Tibial artery (tissue), 4 donors: ENCODE measurements at regions of chr2 and their contacts with region 1.

Region 1: GRCh38 chr2:128090945-128091725 is at the start of gene UGGT1:
- DNase-seq: peak; percentile 94 to 96
- H3K4me3 ChIP-seq: peak within 1 kb of the TSS; percentile 76 to 83
- H3K27ac ChIP-seq: peak within 1 kb of the TSS; percentile 73 to 79
- H3K4me1 ChIP-seq: peaks cover 0 to 21% (median 13%) of the 10 kb centered on the region in 4 donors
- H3K27me3 ChIP-seq: no peaks in the 10 kb centered on the region
- CTCF ChIP-seq: no peak

Region 2: GRCh38 chr2:127884436-127885345 is 206.4 kb before region 1 on chr2:
- intact Hi-C with region 1: loop called (anchors 5 kb)
- DNase-seq: no peak
- H3K4me3 ChIP-seq: peak overlapping the region; percentile 71 to 73
- H3K27ac ChIP-seq: peak overlapping the region; percentile 94 to 95
- H3K4me1 ChIP-seq: peaks cover 0 to 58% (median 31%) of the 10 kb centered on the region in 4 donors
- H3K27me3 ChIP-seq: no peaks in the 10 kb centered on the region
- CTCF ChIP-seq: no peak

Region 3: GRCh38 chr2:127901339-127902056 is 189.6 kb before region 1 on chr2:
- intact Hi-C with region 1: loop called (anchors 10 kb)
- DNase-seq: peak; percentile 64 to 82
- H3K4me3 ChIP-seq: no peak overlapping the region
- H3K27ac ChIP-seq: peak overlapping the region; percentile 47 to 68
- H3K4me1 ChIP-seq: peaks cover 0 to 8% (median 3%) of the 10 kb centered on the region in 4 donors
- H3K27me3 ChIP-seq: peaks cover 0 to 9% of the 10 kb centered on the region in 2 donors
- CTCF ChIP-seq: no peak

Region 4: GRCh38 chr2:128178650-128179460 is 87.7 kb after region 1 on chr2:
- intact Hi-C with region 1: no loop called
- DNase-seq: no peak
- H3K4me3 ChIP-seq: no peak overlapping the region
- H3K27ac ChIP-seq: no peak overlapping the region
- H3K4me1 ChIP-seq: no peaks in the 10 kb centered on the region
- H3K27me3 ChIP-seq: no peaks in the 10 kb centered on the region
- CTCF ChIP-seq: peak; percentile 42 to 49